ENCODE measurements at regions of chr2 and their contacts with region 1.

Region 1: GRCh38 chr2:236240228-236241038 is 23.8 kb downstream of the ASB18 start:
- DNase-seq: peak; percentile 69 to 90
- ATAC-seq: peak; percentile 86 to 90 (median 88)
- H3K4me3 ChIP-seq: peak overlapping the region; percentile 33
- H3K27ac ChIP-seq: peak overlapping the region; percentile 90
- H3K4me1 ChIP-seq: peaks cover 19% of the 10 kb centered on the region
- H3K27me3 ChIP-seq: peaks cover 0 to 11% (median 0%) of the 10 kb centered on the region in 3 donors
- CTCF ChIP-seq: no peak

Region 2: DNA sequence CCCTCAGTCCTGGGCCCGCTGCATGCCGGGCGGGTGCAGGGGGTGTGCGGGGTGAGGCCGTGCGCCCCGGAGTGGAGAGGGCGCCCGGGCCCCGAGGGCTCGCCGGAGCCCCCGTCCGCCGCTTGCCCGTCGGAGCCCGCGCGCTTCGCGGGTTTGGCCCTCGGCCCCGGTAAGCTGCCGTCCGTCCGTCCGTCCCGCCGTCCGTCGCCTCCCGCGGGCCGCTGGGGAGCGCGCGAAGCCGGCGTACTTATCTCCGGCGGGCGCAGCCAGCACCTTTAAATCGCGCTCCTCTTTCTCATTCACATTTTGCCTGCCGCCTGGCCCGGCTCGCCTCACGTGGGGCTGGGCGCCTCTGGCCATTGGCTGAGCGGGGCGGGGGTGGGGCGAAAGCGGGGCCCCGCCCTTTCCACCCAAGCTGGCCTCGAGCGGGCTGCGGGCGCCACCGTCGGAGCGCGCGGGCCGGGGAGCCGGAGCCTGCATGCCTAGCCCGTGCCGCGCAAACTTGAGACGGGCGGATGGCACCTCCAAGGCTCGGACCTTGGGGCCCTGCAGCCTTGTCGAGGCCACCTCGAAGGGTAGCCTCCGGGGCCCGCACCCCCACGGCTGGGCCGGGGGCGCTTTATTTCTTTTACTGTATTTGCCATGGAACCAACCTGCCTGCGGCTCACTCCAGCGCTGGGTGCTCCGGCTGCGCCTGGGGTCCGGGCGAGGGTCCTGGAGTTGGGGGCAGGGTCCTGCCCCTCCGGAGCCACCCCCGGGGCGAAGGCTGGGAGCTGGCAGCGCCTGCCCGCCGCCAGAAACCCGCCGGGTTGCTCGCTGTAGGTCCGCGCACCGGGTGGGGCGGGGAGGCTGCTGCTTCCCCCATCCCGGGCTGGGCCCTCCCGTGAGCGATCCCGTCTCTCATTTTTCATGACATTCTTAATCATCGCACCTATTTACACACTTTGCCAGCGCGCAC is 72.0 kb before region 1 on chr2 and contains the start of gene GBX2:
- intact Hi-C with region 1: no loop called
- DNase-seq: peak in 1 of 2 donors; percentile 69
- ATAC-seq: peak; percentile 60 to 86 (median 78)
- H3K4me3 ChIP-seq: peak within 1 kb of the TSS; percentile 62
- H3K27ac ChIP-seq: no peak within 1 kb of the TSS
- H3K4me1 ChIP-seq: peaks cover 24% of the 10 kb centered on the region
- H3K27me3 ChIP-seq: peaks cover 3 to 100% (median 67%) of the 10 kb centered on the region in 3 donors
- CTCF ChIP-seq: no peak
- total RNA-seq, gene GBX2: not detected

Region 3: GRCh38 chr2:236214376-236214995 is 25.9 kb before region 1 on chr2:
- intact Hi-C with region 1: loop called in 1 of 2 experiments (anchors 1 kb)
- DNase-seq: no peak
- ATAC-seq: no peak
- H3K4me3 ChIP-seq: no peak overlapping the region
- H3K27ac ChIP-seq: no peak overlapping the region
- H3K4me1 ChIP-seq: peaks cover 5% of the 10 kb centered on the region
- H3K27me3 ChIP-seq: peaks cover 0 to 2% (median 0%) of the 10 kb centered on the region in 3 donors
- CTCF ChIP-seq: no peak

Region 4: DNA sequence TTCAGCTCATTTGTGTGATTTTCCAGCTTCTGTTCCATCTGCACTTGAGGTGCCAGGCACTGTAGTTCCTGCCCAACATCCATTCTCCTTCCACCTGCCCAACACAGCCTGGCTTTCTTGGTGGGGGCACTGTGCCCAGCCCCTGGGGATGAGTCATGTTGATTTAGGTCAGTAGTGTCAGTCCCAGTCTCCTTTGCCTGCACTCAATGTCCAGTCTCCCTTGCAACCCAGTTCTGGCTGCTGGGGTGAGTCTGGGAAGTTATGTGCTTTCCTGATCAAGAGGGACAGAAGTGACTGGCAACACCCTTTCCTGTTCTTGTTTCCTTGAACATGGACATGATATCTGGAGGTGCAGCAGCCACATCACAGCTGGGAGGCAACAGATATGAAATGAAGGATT is 25.2 kb after region 1 on chr2:
- intact Hi-C with region 1: loop called in 1 of 2 experiments (anchors 1 kb)
- DNase-seq: peak; percentile 48 to 81
- ATAC-seq: peak; percentile 67 to 79 (median 76)
- H3K4me3 ChIP-seq: no peak overlapping the region
- H3K27ac ChIP-seq: peak overlapping the region; percentile 86
- H3K4me1 ChIP-seq: peaks cover 47% of the 10 kb centered on the region
- H3K27me3 ChIP-seq: no peaks in the 10 kb centered on the region
- CTCF ChIP-seq: no peak

Region 5: GRCh38 chr2:236298924-236299475 is 58.6 kb after region 1 on chr2:
- intact Hi-C with region 1: loop called in 1 of 2 experiments (anchors 2 kb)
- DNase-seq: no peak
- ATAC-seq: no peak
- H3K4me3 ChIP-seq: no peak overlapping the region
- H3K27ac ChIP-seq: no peak overlapping the region
- H3K4me1 ChIP-seq: peaks cover 20% of the 10 kb centered on the region
- H3K27me3 ChIP-seq: no peaks in the 10 kb centered on the region
- CTCF ChIP-seq: no peak

Region 6: DNA sequence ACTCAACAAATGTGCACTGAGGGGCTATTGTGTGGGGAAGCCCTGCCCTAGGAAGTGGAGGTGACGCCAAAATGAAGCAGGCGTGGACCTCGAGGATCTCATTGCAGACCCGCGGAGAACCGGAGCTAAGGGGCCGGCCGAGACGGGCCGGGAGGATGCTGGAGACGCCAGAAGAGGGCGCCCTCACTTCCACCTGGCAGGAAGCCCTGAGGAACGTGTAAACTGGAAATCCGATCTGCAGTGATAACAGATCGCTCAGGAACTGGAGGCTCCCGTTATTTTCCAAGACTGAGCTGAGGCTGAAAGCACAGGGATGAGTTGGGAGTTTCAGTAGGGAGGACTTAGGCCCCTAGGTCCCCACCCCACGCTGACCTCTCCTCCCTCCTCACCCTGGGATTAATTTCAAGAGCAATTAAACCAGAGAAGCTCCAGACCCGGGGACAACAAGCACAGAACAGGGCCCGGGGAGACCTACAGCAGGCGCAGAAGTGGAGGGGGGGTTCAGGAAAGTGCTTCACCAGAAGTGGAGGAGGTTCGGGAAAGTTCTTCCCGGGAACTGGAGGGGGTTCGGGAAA is 1181.2 kb after region 1 on chr2:
- intact Hi-C with region 1: loop called in 1 of 2 experiments (anchors 10 kb)
- DNase-seq: peak; percentile 84 to 92
- ATAC-seq: peak; percentile 94 to 98 (median 95)
- H3K4me3 ChIP-seq: peak overlapping the region; percentile 40
- H3K27ac ChIP-seq: peak overlapping the region; percentile 31
- H3K4me1 ChIP-seq: peaks cover 14% of the 10 kb centered on the region
- H3K27me3 ChIP-seq: no peaks in the 10 kb centered on the region
- CTCF ChIP-seq: peak; percentile 82

Measured in psoas muscle (tissue), 8 donors.